Activated CD4-positive, alpha-beta T cell treated with anti-CD3 and anti-CD28 coated beads, Interleukin-2, amount 10 ng/mL, durations not matched to agents 24 days and 14 days (primary cell): ENCODE measurements at regions of chr1 and their contacts with region 1.

Region 1: DNA sequence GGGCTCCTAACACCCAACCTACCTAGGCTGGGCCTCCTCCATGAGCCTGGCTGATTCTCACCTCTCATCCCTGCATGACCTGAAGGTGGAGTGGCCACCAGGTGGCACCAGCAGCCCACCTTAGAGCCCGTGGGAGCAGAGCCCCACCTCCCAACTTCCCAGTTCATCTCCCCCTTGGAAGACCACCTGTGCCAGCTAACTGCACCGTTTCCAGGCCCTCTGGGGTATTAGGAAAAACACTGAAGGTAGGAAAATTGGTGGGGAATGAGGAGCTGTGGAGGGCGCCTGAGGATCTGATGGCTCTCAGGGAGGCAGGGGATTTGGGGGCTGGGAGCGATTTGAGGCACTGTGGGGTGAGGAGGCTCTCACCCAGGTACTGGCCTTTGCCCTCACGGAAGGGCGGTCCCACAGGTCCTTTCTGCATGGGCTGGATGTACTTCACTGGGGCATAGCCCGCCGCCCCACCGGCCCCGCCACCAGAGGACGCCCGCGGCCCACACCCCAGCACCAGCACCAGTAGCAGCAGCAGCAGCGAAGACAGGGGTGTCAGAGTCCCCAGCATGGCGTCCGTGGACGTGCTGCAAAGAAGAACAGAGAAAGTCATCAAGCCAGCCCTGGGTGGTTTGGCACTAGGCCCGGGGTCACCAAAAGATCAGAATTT is 11.1 kb downstream of the ADPRS start:
- DNase-seq: peak; percentile 93
- H3K4me3 Mint-ChIP-seq: no peak overlapping the region
- H3K27ac Mint-ChIP-seq: no peak overlapping the region
- H3K4me1 Mint-ChIP-seq: peaks cover 5% of the 10 kb centered on the region
- H3K27me3 Mint-ChIP-seq: no peaks in the 10 kb centered on the region

Region 2: DNA sequence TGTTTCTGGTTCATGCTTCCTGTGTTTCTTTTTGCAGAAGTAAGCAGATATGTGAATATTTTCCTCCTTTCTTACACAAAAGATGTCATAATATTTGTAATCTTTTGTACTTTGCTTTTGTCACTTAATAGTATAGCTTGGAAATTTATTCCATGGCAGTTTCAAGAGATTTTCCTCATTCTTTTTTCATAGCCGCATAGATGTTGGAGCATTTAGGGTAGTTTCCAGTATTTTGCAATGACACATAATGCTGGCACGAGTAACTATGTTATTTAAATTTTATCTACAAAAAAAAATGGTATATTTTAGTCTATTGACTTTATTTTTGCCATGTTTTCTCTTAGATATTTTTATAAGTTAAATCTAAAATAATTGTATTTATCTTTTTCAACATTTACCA is 128.2 kb before region 1 on chr1:
- intact Hi-C with region 1: no loop called
- DNase-seq: no peak
- H3K4me3 Mint-ChIP-seq: no peak overlapping the region
- H3K27ac Mint-ChIP-seq: no peak overlapping the region
- H3K4me1 Mint-ChIP-seq: peaks cover 3% of the 10 kb centered on the region
- H3K27me3 Mint-ChIP-seq: no peaks in the 10 kb centered on the region

Region 3: DNA sequence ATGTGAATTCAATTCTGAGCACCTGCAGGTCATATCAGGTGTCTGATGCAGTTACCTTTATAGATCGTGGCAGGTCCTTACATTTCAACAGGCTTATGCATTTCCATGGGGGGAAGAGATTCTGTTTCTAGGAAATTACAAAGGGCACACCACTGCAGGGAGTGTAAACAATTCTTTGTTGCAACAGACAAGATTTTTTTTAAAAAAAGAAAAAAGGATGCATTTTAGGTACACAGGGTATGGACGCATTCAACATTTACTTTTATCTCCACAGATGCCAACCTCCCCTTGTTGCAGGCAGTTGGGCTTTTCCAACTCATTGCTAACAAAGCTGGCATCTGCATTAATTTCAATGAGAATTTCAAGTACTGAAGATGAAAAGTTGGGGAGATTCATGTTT is 29.5 kb before region 1 on chr1:
- intact Hi-C with region 1: no loop called
- DNase-seq: no peak
- H3K4me3 Mint-ChIP-seq: no peak overlapping the region
- H3K27ac Mint-ChIP-seq: no peak overlapping the region
- H3K4me1 Mint-ChIP-seq: no peaks in the 10 kb centered on the region
- H3K27me3 Mint-ChIP-seq: no peaks in the 10 kb centered on the region

Region 4: GRCh38 chr1:36134505-36135329 is 34.9 kb after region 1 on chr1:
- intact Hi-C with region 1: loop called (anchors 2 kb)
- DNase-seq: peak; percentile 80
- H3K4me3 Mint-ChIP-seq: no peak overlapping the region
- H3K27ac Mint-ChIP-seq: no peak overlapping the region
- H3K4me1 Mint-ChIP-seq: peaks cover 5% of the 10 kb centered on the region
- H3K27me3 Mint-ChIP-seq: no peaks in the 10 kb centered on the region

Region 5: DNA sequence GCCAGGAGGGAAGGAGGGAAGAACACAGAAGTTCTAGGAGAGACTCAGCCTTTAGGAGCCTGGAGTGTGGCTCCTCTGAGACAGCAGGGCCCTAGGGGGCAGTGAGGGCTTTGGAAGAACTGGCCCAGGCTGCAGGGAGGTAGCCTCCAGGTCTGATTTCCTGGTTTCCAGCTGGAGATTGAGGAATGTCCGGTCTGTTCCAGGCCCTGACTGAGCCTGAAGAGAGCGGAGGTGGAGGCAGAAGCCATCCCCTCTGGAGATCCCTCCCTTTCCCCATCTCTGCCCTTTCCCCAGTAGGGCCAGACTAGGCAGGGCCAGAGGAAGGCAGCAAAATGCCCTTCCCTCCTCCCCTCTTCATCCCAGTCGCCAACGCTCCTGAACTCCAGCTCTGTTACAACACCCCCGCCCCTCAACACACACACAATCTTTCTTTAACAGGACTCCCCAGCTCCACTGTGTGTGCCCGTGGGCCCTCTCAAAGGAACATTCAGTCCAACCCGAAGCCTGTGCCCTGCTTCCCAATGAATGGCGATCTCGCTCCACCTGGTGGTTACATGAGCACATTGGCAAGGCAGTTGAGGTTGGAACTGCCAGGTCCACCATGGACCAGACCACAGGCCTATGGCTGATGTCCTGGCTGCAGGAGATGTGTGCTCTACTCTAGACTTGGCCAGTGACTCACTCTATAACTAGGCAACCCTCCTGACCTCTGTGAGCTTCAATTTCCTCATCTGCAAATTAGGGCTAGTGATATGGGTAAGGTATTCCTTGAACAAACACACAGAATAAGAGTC is 88.2 kb after region 1 on chr1:
- intact Hi-C with region 1: loop called (anchors 1 kb)
- DNase-seq: peak; percentile 94
- H3K4me3 Mint-ChIP-seq: no peak overlapping the region
- H3K27ac Mint-ChIP-seq: peak overlapping the region; percentile 79
- H3K4me1 Mint-ChIP-seq: peaks cover 6% of the 10 kb centered on the region
- H3K27me3 Mint-ChIP-seq: no peaks in the 10 kb centered on the region

Region 6: DNA sequence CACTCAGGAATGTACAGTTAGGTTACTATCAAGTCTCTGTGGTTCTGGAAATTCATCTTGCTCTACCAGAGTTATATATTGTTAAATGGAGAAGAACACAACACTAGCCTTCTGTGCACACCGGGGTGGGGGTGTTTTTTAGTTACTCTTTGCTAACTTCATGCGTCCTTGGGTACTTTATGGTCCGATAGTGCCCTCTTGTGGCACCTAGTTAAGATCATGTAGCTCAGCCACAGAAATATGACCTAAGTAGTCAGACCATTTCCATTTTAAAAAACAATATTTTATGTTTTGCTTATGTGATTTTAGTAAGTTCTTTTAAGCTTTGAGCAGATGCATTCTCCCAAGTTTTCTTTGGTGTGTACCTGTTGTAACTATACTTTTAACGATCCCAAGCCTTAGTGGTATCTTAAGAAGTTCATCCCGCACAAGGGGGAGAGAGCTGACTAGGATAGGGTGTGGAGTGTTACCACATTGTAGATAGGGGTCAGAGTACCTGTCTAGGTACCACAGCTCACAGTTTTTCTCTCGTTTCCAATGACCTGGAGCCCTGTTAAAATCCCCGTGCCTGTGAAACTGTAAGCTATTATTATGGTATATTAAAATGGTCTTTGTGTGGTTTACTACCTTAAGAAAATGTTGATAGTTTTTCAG is 185.8 kb after region 1 on chr1:
- intact Hi-C with region 1: loop called (anchors 2 kb)
- DNase-seq: peak; percentile 90
- H3K4me3 Mint-ChIP-seq: no peak overlapping the region
- H3K27ac Mint-ChIP-seq: peak overlapping the region; percentile 34
- H3K4me1 Mint-ChIP-seq: peaks cover 18% of the 10 kb centered on the region
- H3K27me3 Mint-ChIP-seq: no peaks in the 10 kb centered on the region

Region 7: GRCh38 chr1:36369061-36369861 is 269.4 kb after region 1 on chr1:
- intact Hi-C with region 1: loop called (anchors 2 kb)
- DNase-seq: peak; percentile 95
- H3K4me3 Mint-ChIP-seq: no peak overlapping the region
- H3K27ac Mint-ChIP-seq: peak overlapping the region; percentile 78
- H3K4me1 Mint-ChIP-seq: peaks cover 55% of the 10 kb centered on the region
- H3K27me3 Mint-ChIP-seq: no peaks in the 10 kb centered on the region

Region 8: GRCh38 chr1:36420836-36421664 is 321.2 kb after region 1 on chr1:
- intact Hi-C with region 1: loop called (anchors 5 kb)
- DNase-seq: peak; percentile 98
- H3K4me3 Mint-ChIP-seq: peak overlapping the region; percentile 26
- H3K27ac Mint-ChIP-seq: peak overlapping the region; percentile 64
- H3K4me1 Mint-ChIP-seq: peaks cover 13% of the 10 kb centered on the region
- H3K27me3 Mint-ChIP-seq: no peaks in the 10 kb centered on the region